ENCODE measurements at regions of chr11 and their contacts with region 1.

Region 1: DNA sequence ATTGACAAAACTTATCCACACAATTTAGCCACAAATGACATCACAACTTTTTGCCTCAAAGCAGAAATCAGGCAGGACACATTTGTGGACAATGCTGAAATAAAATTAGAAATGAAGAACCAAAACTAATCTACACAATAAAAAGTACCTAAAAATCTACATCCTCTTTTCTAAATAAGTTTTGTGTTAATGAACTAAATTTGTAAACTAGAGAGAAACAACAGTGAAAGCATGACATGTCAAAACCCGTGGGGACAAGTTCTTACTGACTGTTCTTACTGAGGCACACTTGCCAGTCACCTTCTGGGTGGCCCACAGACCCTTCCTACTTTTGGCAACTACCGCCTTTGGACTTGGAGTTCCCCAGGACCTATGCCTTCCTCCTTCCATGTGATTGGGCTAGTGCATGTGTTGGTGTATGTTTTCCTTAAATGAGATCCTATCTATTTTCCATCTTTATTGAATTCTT is 60.7 kb upstream of the MUC15 start:
- DNase-seq: no peak
- H3K4me3 ChIP-seq: no peak overlapping the region
- CTCF ChIP-seq: no peak

Region 2: GRCh38 chr11:26365284-26365683 is 267.4 kb before region 1 on chr11:
- CTCF ChIA-PET with region 1: no interaction called
- POLR2A ChIA-PET with region 1: no interaction called
- DNase-seq: no peak
- H3K4me3 ChIP-seq: no peak overlapping the region
- CTCF ChIP-seq: no peak

Region 3: GRCh38 chr11:26649884-26650283 is 17.2 kb after region 1 on chr11:
- CTCF ChIA-PET with region 1: interaction called, 13 read pairs
- POLR2A ChIA-PET with region 1: no interaction called
- DNase-seq: peak; percentile 29
- H3K4me3 ChIP-seq: no peak overlapping the region
- CTCF ChIP-seq: peak; percentile 68

Region 4: GRCh38 chr11:27084518-27084917 is 451.8 kb after region 1 on chr11:
- CTCF ChIA-PET with region 1: no interaction called
- POLR2A ChIA-PET with region 1: no interaction called
- DNase-seq: no peak
- H3K4me3 ChIP-seq: no peak overlapping the region
- CTCF ChIP-seq: no peak